PC-9 (cell line): ENCODE measurements at regions of chr3 and their contacts with region 1.

Region 1: GRCh38 chr3:157081681-157082210 is 78.2 kb downstream of the CCNL1 start:
- DNase-seq: peak; percentile 95 to 98
- H3K4me3 ChIP-seq: peak overlapping the region; percentile 9; the same call in 1 of the 2 replicates
- H3K27ac ChIP-seq: peak overlapping the region; percentile 92
- H3K4me1 ChIP-seq: peaks cover 49% of the 10 kb centered on the region
- H3K27me3 ChIP-seq: no peaks in the 10 kb centered on the region
- CTCF ChIP-seq: peak; percentile 100

Region 2: GRCh38 chr3:156151824-156152428 is 929.8 kb before region 1 on chr3:
- CTCF ChIA-PET with region 1: interaction called, 4 read pairs
- POLR2A ChIA-PET with region 1: no interaction called
- intact Hi-C with region 1: loop called (anchors 1 kb)
- DNase-seq: peak; percentile 49 to 62
- H3K4me3 ChIP-seq: no peak overlapping the region
- H3K27ac ChIP-seq: no peak overlapping the region
- H3K4me1 ChIP-seq: no peaks in the 10 kb centered on the region
- H3K27me3 ChIP-seq: no peaks in the 10 kb centered on the region
- CTCF ChIP-seq: peak; percentile 92

Region 3: DNA sequence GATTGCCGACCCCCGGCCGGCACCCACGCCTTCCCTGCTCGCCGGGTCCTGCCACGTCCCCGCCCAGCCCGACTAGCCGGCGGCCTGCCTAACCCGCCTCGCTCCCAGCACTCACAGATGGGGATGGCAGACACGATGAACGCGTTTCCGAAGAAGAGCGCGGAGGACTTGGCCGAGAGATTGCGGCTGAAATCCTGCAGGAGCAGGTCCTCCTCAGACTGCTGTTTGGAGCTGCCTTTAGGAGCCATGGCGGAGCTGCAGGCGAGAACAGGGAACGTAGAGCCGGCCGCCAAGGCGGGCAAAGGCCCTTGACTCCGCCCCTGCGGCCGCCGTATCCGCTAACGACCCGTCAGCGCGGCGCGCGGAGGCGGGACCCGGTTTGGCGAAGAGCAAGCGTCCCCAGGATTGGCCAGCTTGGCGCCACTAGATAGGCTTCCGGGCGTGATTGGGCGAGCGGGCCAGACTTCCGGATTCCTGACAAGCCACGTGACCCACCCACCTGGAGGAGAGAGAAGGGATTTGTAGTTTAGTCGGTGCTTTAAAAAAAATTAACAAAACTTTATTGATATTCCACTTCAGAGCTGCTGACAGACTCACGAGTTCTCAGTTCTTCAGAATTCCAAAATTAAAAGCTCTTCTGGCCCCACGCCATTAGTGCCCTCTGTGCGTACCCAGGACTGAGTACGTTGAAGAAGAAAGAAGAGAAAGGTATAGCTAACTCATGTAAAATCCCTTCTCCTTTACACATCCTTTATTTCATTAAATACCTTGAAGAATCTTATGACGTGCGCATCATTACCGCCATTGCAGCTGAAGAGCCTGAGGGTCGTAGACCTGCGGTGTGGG is 526.7 kb before region 1 on chr3 and contains the start of gene SSR3:
- CTCF ChIA-PET with region 1: no interaction called
- POLR2A ChIA-PET with region 1: no interaction called
- intact Hi-C with region 1: loop called (anchors 1 kb)
- DNase-seq: peak; percentile 98 to 99
- H3K4me3 ChIP-seq: peak within 1 kb of the TSS; percentile 99
- H3K27ac ChIP-seq: peak within 1 kb of the TSS; percentile 83
- H3K4me1 ChIP-seq: peaks cover 35% of the 10 kb centered on the region
- H3K27me3 ChIP-seq: no peaks in the 10 kb centered on the region
- CTCF ChIP-seq: peak; percentile 19; the same call in 1 of the 2 replicates
- total RNA-seq, gene SSR3: 117 and 152 TPM in 2 replicates

Region 4: GRCh38 chr3:156816800-156817645 is 264.7 kb before region 1 on chr3:
- CTCF ChIA-PET with region 1: interaction called, 3 read pairs
- POLR2A ChIA-PET with region 1: interaction called, 10 read pairs
- intact Hi-C with region 1: loop called (anchors 1 kb)
- DNase-seq: peak; percentile 86 to 92
- H3K4me3 ChIP-seq: peak overlapping the region; percentile 87
- H3K27ac ChIP-seq: peak overlapping the region; percentile 97
- H3K4me1 ChIP-seq: peaks cover 71% of the 10 kb centered on the region
- H3K27me3 ChIP-seq: no peaks in the 10 kb centered on the region
- CTCF ChIP-seq: peak; percentile 17; the same call in 1 of the 2 replicates

Region 5: GRCh38 chr3:157159762-157160657 is 78.3 kb after region 1 on chr3 and contains the start of gene CCNL1:
- CTCF ChIA-PET with region 1: no interaction called
- POLR2A ChIA-PET with region 1: interaction called, 10 read pairs
- intact Hi-C with region 1: no loop called
- DNase-seq: peak; percentile 92 to 97
- H3K4me3 ChIP-seq: peak within 1 kb of the TSS; percentile 93
- H3K27ac ChIP-seq: peak within 1 kb of the TSS; percentile 100
- H3K4me1 ChIP-seq: peaks cover 50% of the 10 kb centered on the region
- H3K27me3 ChIP-seq: no peaks in the 10 kb centered on the region
- CTCF ChIP-seq: no peak
- total RNA-seq, gene CCNL1: 91.3 and 101 TPM in 2 replicates